ENCODE measurements at regions of chr15 and their contacts with region 1.

Region 1: DNA sequence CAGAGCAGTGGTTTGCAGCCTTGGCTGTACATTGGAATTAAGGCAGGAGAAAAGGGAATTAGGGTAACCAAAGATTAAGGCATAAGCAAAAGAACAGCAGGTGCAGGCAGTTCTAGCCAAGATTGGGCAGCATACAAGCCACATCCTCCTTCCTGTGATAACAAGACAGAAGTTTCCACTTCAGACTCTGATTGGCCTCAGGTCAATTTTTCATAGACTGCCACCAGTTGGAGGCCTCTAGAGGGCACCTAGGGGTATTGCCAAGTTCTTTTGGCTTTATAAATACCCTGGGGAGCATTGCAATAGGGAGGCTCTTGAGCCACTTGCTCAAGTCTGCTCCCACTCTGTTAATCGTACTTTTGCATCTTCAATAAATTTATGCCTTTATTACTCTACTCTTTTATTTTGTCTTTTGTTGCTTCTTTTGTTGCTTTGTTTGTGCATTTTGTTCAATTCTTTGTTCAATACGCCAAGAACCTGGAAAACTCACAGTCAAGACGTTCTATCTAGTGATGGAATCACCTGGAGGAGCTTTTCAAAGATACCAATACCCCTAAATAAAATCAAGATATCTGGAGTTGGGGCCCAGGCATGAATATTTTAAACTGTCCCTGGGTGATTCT is 32.2 kb upstream of the FMN1 start:
- DNase-seq: no peak
- H3K4me3 ChIP-seq: no peak overlapping the region
- H3K27ac ChIP-seq: no peak overlapping the region
- H3K4me1 ChIP-seq: no peaks in the 10 kb centered on the region
- H3K27me3 ChIP-seq: no peaks in the 10 kb centered on the region
- CTCF ChIP-seq: no peak
- POLR2A ChIP-seq: no peak

Region 2: GRCh38 chr15:33154351-33155166 is 72.1 kb before region 1 on chr15:
- intact Hi-C with region 1: no loop called
- DNase-seq: peak in 1 of 2 donors; percentile 32
- H3K4me3 ChIP-seq: peak overlapping the region in 2 of 3 donors; percentile 25 to 33
- H3K27ac ChIP-seq: no peak overlapping the region
- H3K4me1 ChIP-seq: no peaks in the 10 kb centered on the region
- H3K27me3 ChIP-seq: no peaks in the 10 kb centered on the region
- CTCF ChIP-seq: no peak
- POLR2A ChIP-seq: no peak

Region 3: DNA sequence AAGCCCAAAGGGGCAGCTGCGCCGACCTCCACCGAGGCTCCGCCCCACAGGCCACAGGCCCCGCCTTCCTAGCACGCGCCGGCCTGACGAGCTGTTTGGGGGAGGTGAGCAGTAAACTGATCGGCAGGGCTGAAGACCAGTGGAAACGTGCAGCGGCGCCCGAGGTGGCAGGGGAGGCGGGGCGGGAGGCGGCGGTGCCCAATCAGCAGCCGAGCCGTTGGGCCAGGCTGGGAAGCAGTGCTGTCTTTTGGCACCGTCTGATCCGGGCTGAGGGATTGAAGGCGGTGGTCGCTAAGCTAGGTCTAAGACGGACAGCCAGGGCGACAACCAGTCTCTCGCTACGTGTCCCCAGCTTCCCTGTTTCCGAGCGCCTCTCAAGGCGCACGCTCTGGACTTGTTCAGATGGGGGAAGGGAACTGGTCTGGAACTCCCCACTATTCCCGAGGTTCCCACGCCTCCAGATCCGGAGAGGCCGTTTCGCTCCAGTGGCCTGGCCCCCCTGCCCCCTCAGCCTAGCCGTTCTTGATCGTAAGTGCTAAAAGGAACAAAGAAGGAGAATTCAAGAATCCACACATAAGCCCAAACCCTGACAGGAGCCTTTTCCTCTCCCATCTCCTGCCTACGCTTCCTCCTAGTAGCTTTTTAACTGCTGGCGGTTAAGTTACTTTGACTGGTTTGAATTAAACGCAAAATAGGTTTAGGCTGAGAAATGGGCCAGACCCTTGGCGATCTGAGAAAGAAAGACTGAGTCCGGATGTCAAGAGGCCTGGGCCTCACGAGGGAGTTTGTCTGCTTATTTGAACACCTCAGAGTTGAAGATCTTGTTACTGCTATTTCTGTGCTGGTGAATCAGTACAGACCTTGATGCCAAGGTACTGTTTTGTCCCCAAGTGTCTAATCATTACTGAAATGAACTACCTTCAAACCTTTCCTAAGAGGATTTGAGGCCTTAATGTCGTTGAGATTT is 31.7 kb before region 1 on chr15 and contains the start of gene FMN1:
- intact Hi-C with region 1: no loop called
- DNase-seq: peak; percentile 88 to 92
- H3K4me3 ChIP-seq: peak within 1 kb of the TSS; percentile 46 to 79 (median 52)
- H3K27ac ChIP-seq: peak within 1 kb of the TSS; percentile 64 to 76
- H3K4me1 ChIP-seq: no peaks in the 10 kb centered on the region
- H3K27me3 ChIP-seq: peaks cover 0 to 3% of the 10 kb centered on the region in 2 donors
- CTCF ChIP-seq: no peak
- POLR2A ChIP-seq: no peak
- total RNA-seq, gene FMN1: 33.1 to 56.8 (median 50.7) TPM

Region 4: GRCh38 chr15:33309602-33310276 is 83.1 kb after region 1 on chr15:
- intact Hi-C with region 1: loop called (anchors 2 kb)
- DNase-seq: no peak
- H3K4me3 ChIP-seq: peak overlapping the region in 1 of 3 donors; percentile 71
- H3K27ac ChIP-seq: no peak overlapping the region
- H3K4me1 ChIP-seq: no peaks in the 10 kb centered on the region
- H3K27me3 ChIP-seq: peaks cover 0 to 22% of the 10 kb centered on the region in 2 donors
- CTCF ChIP-seq: no peak
- POLR2A ChIP-seq: no peak

Measured in breast epithelium (tissue), 4 donors.